CD4-positive, alpha-beta T cell (primary cell): ENCODE measurements at regions of chr3 and their contacts with region 1.

Region 1: DNA sequence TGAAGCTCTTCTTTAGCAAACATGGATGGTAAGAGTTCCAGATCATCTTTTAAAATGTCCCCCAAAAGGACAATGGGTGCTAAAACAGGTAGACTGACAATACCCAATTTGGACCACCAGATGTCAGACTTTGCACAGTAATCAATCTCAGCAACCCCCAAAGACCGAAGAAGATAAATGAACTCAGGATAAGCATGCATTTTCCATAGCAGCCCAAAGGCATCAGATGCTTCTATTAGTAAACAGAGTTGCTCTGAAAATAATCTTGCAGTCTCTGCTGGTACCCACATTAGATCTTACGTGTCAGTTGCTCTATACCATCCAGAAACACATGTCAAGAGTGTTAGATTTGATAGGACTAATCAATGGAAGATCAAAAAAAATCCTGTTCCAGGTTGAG is 20.6 kb downstream of the MYH15 start:
- DNase-seq: peak in 10 of 14 experiments; percentile 8 to 83 (median 25)
- ATAC-seq: peak; percentile 92
- H3K4me3 ChIP-seq: no peak overlapping the region
- H3K4me3 Mint-ChIP-seq: no peak overlapping the region
- H3K27ac ChIP-seq: no peak overlapping the region
- H3K27ac Mint-ChIP-seq: no peak overlapping the region
- H3K4me1 ChIP-seq: no peaks in the 10 kb centered on the region
- H3K4me1 Mint-ChIP-seq: peaks cover 4% of the 10 kb centered on the region
- H3K27me3 ChIP-seq: no peaks in the 10 kb centered on the region
- H3K27me3 Mint-ChIP-seq: no peaks in the 10 kb centered on the region
- CTCF ChIP-seq: peak; percentile 76

Region 2: GRCh38 chr3:108477511-108478147 is 12.1 kb before region 1 on chr3:
- CTCF ChIA-PET with region 1: interaction called, 14 read pairs
- POLR2A ChIA-PET with region 1: no interaction called
- intact Hi-C with region 1: no loop called
- DNase-seq: peak; percentile 23 to 78 (median 44)
- ATAC-seq: peak; percentile 89
- H3K4me3 ChIP-seq: no peak overlapping the region
- H3K4me3 Mint-ChIP-seq: no peak overlapping the region
- H3K27ac ChIP-seq: no peak overlapping the region
- H3K27ac Mint-ChIP-seq: no peak overlapping the region
- H3K4me1 ChIP-seq: no peaks in the 10 kb centered on the region
- H3K4me1 Mint-ChIP-seq: peaks cover 4% of the 10 kb centered on the region
- H3K27me3 ChIP-seq: no peaks in the 10 kb centered on the region
- H3K27me3 Mint-ChIP-seq: no peaks in the 10 kb centered on the region
- CTCF ChIP-seq: peak; percentile 72

Region 3: DNA sequence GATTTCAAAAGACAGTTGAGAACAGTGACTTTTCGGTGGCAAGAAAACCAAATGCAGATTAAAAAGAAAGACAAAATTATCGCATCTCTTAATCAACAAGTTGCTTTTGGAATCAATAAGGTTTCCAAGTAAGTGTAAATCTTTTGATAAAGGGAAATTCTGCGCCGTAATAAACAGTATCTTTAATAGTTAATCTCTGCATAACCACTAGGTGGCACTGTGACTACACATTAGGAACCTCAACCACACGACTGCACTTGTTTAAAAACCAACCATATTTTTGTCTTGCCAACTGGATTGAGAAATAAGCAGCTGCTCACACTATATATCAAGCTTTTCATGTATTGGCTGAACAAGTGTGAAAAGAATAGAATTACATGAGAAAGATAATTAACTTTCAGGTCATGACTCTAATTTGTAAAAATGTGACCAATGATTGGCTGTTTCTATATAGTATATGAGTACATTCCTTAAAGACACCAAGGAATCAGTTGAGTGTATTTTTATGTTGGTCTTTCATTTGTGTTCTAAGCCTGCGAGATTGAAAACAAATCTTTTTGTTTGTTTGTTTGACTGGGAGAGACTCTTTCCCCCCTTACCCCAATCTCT is 172.5 kb after region 1 on chr3:
- CTCF ChIA-PET with region 1: no interaction called
- POLR2A ChIA-PET with region 1: no interaction called
- intact Hi-C with region 1: loop called (anchors 1 kb)
- DNase-seq: peak in 11 of 14 experiments; percentile 5 to 87 (median 40)
- ATAC-seq: peak; percentile 81
- H3K4me3 ChIP-seq: no peak overlapping the region
- H3K4me3 Mint-ChIP-seq: no peak overlapping the region
- H3K27ac ChIP-seq: no peak overlapping the region
- H3K27ac Mint-ChIP-seq: no peak overlapping the region
- H3K4me1 ChIP-seq: no peaks in the 10 kb centered on the region
- H3K4me1 Mint-ChIP-seq: peaks cover 20% of the 10 kb centered on the region
- H3K27me3 ChIP-seq: no peaks in the 10 kb centered on the region
- H3K27me3 Mint-ChIP-seq: no peaks in the 10 kb centered on the region
- CTCF ChIP-seq: peak; percentile 90

Region 4: DNA sequence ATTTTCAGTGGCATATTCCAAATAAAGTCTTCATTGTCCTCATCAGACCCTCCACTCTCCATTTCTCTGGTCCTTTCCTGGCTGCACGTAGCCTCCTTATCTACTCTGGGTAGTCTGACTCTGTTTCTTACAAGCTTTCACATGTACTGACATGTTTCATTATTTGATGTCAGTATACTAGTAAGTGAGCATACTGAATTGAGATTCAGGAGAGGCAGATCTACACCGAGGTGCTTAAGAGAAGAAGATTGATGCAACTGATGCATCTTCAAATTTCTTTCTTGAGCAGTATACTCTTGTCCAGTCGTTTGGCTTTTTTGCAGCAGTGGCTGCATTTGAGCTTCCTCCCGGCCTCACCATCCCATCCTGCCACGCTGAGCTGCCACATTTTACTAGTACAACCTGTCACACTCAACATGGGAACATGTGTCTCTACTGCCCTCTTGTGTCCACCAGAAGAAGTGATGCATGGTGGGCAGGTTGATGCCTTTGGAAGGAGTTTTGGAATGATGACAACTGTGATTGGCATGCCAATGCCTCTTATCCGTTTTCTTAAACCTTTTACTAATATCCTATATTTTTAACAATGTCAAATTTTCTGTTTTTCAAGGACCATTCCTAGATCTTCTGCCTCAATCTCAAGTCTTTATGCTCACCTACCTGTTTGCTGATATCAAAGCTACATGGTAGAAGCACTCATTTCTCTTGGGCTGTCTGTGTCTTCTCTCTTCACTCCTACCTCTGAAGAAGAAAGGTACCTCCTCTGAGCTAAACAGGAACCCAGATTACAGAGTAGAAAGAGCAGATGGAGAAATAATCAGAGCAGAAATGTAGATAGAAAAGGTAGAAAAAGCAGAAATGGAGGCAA is 425.2 kb after region 1 on chr3:
- CTCF ChIA-PET with region 1: interaction called, 6 read pairs
- POLR2A ChIA-PET with region 1: no interaction called
- intact Hi-C with region 1: loop called (anchors 1 kb)
- DNase-seq: peak; percentile 40 to 86 (median 52)
- ATAC-seq: peak; percentile 97
- H3K4me3 ChIP-seq: no peak overlapping the region
- H3K4me3 Mint-ChIP-seq: peak overlapping the region; percentile 52
- H3K27ac ChIP-seq: no peak overlapping the region
- H3K27ac Mint-ChIP-seq: no peak overlapping the region
- H3K4me1 ChIP-seq: peaks cover 6% of the 10 kb centered on the region
- H3K4me1 Mint-ChIP-seq: peaks cover 17% of the 10 kb centered on the region
- H3K27me3 ChIP-seq: no peaks in the 10 kb centered on the region
- H3K27me3 Mint-ChIP-seq: no peaks in the 10 kb centered on the region
- CTCF ChIP-seq: peak; percentile 88

Region 5: GRCh38 chr3:110314512-110315114 is 1824.8 kb after region 1 on chr3:
- CTCF ChIA-PET with region 1: no interaction called
- POLR2A ChIA-PET with region 1: no interaction called
- intact Hi-C with region 1: loop called (anchors 2 to 10 kb)
- DNase-seq: peak; percentile 7 to 75 (median 40)
- ATAC-seq: peak; percentile 63
- H3K4me3 ChIP-seq: no peak overlapping the region
- H3K4me3 Mint-ChIP-seq: no peak overlapping the region
- H3K27ac ChIP-seq: no peak overlapping the region
- H3K27ac Mint-ChIP-seq: no peak overlapping the region
- H3K4me1 ChIP-seq: peaks cover 3% of the 10 kb centered on the region
- H3K4me1 Mint-ChIP-seq: no peaks in the 10 kb centered on the region
- H3K27me3 ChIP-seq: no peaks in the 10 kb centered on the region
- H3K27me3 Mint-ChIP-seq: no peaks in the 10 kb centered on the region
- CTCF ChIP-seq: peak; percentile 77